Posterior vena cava (tissue), 2 donors: ENCODE measurements at regions of chr5 and their contacts with region 1.

Region 1: DNA sequence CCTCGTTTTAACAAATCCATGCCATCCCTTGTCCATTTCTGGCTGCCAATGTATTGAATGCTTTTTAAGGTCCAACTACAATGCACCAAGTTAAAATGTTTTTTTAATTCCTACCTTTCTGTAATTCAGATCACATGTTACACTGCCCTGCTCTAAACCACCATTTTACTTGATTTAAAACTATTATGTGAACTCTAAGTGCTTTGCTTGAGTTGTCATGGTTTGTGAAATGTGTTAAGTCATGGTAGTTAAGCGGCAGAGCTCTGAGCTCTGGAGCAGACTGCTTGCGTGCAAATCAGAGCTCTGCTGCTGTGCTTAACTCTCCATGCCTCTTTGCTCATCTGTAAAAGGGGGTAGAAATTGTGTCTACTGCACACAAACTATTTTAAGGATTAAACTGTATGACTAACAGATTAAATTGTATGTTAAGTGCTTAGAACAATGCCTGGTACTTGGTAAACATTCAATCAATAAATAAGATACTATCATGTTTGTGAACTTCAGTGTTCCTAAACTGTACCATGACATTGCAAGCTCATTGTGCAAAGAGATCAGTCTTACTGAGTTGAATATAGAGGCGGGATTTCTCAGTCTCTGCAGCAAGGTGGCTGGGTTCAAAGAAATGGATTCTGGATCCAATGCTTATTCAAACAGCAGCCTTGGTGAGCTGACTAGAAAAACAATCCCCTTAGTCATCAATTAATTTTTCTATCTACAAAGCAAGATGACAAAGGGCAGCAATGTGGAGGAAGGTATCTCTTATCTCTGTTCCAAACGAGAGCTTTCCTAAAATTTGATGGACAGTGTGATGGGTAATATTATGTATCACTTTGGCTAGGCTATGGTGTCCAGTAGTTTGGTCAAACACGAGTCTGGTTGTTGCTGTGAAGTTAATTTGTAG is 16.1 kb upstream of the CMBL start:
- DNase-seq: no peak

Region 2: GRCh38 chr5:9877488-9877887 is 446.4 kb before region 1 on chr5:
- intact Hi-C with region 1: no loop called
- DNase-seq: no peak

Region 3: DNA sequence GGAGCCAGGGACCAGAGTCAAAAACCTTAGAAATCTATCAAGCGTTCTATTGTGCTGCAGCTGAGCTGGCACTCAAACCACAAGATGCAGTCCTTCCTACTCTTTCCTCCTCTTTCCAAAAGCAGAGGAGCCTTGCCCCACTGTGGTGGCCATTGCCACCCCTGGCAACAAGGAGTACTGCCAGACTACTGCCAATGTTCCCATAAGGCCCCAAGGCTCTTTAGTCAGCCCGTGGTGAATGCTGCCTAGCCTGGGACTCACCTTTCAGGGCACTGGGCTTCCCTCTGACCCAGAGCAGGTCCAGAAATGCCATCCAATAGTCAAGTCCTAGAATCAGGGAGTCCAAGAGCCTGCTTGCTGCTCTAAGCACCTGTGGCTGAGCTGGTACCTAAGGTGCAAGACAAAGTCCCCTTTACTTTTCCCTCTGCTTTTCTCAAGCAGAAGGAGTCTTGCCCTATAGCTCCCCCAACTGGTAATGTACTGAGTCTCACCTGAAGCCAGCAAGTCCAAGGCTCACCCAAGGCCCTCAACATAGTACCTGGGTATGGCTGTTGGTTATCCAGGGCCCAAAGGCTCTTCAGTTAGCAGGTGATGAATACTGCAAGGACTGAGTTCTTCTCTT is 293.5 kb before region 1 on chr5:
- intact Hi-C with region 1: loop called in 1 of 2 experiments (anchors 5 kb)
- DNase-seq: no peak

Region 4: DNA sequence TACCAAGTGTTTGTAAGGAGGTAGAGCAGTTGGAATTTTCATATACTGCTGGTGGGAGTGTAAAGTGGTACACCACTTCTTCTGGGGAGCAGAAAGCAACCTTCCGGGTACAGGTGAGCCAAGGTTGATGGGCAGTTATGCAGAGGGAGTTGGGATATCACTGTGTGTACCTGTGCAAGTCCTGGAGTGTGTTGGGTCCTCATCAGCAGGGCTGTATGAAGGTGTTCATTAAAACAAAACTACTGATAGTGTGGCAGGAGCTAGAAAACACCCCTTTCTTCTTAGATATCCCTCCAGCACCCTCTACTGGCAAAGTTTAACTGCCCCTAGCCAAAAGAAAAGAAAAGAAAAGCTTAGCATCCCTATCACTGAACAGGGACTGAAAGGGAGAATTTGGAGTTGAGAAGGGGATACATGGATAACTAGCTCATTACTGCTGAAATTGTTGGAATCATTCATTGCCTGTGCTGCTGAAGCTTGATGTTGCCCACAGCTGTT is 40.4 kb after region 1 on chr5:
- intact Hi-C with region 1: no loop called
- DNase-seq: no peak